ENCODE measurements at regions of chr11 and their contacts with region 1.

Region 1: GRCh38 chr11:22337596-22338485 is at the start of gene SLC17A6:
- DNase-seq: no peak
- H3K4me3 ChIP-seq: no peak within 1 kb of the TSS
- H3K27ac ChIP-seq: no peak within 1 kb of the TSS
- H3K4me1 ChIP-seq: peaks cover 0 to 11% (median 3%) of the 10 kb centered on the region in 4 donors
- H3K27me3 ChIP-seq: peaks cover 6 to 68% (median 36%) of the 10 kb centered on the region in 4 donors
- CTCF ChIP-seq: no peak
- EP300 ChIP-seq: no peak
- POLR2A ChIP-seq: no peak
- total RNA-seq, gene SLC17A6: not detected

Region 2: GRCh38 chr11:22539821-22540256 is 202.0 kb after region 1 on chr11:
- intact Hi-C with region 1: loop called (anchors 10 kb)
- DNase-seq: no peak
- H3K4me3 ChIP-seq: no peak overlapping the region
- H3K27ac ChIP-seq: no peak overlapping the region
- H3K4me1 ChIP-seq: no peaks in the 10 kb centered on the region
- H3K27me3 ChIP-seq: no peaks in the 10 kb centered on the region
- CTCF ChIP-seq: peak in 2 of 3 experiments; percentile 30 to 48
- EP300 ChIP-seq: no peak
- POLR2A ChIP-seq: no peak

Measured in esophagus muscularis mucosa (tissue), 4 donors.